CD4-positive, alpha-beta memory T cell (primary cell): ENCODE measurements at regions of chr19 and their contacts with region 1.

Region 1: GRCh38 chr19:1249298-1249989 is 1.1 kb downstream of the MIDN start:
- DNase-seq: peak; percentile 92 to 97 (median 95)
- H3K4me3 ChIP-seq: peak overlapping the region in 1 of 2 donors; percentile 77
- H3K4me3 Mint-ChIP-seq: peak overlapping the region; percentile 83 to 94 (median 90)
- H3K27ac ChIP-seq: peak overlapping the region; percentile 92
- H3K27ac Mint-ChIP-seq: peak overlapping the region; percentile 89 to 94 (median 91)
- H3K4me1 ChIP-seq: peaks cover 33% of the 10 kb centered on the region
- H3K4me1 Mint-ChIP-seq: peaks cover 2 to 26% (median 9%) of the 10 kb centered on the region in 4 donors
- H3K27me3 ChIP-seq: no peaks in the 10 kb centered on the region
- H3K27me3 Mint-ChIP-seq: no peaks in the 10 kb centered on the region

Region 2: DNA sequence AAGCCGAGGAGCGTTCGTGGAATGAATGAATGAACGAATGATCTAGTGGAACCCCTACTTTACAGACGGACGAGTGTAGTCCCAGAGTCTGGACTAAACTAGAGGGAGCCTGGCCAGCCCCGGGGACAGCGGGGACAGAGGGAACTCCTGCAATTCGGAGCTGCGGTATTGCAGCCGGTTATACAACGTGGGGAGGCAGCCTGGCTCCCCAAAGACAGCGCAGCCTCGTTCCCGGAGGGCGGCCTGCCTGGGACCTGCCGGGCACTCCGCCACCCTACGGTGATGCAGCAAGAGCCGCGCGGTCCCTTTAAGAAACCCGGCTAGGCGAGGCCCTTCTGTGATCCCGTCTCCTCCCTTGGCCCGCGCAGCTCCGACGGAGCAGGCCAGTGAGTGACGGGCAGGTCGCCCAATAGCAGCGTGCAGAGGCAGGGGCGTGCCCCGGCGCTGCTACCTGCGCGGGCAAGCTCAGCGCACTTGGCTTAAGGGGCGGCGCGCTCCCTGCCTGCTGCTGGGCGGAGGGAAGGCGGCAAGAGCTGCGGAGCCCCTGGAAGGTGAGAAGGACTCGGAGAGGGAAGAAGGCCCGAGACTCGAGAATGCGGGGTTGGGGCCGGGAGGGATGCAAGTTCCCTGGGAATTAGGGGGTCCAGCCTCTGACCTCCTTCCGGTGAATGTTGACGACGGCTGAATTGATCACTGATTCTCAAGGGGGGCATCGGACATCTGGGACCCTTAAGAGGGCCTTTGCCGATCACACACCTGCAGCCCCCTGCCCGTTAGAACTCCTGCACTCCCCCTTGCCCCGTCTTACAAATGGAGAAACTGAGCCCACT is 209.6 kb before region 1 on chr19 and contains the start of gene ABCA7:
- CTCF ChIA-PET with region 1: no interaction called
- POLR2A ChIA-PET with region 1: no interaction called
- intact Hi-C with region 1: no loop called
- DNase-seq: peak; percentile 98 to 99 (median 98)
- H3K4me3 ChIP-seq: peak within 1 kb of the TSS; percentile 56 to 100
- H3K4me3 Mint-ChIP-seq: peak within 1 kb of the TSS; percentile 95 to 100 (median 97)
- H3K27ac ChIP-seq: peak within 1 kb of the TSS; percentile 75
- H3K27ac Mint-ChIP-seq: peak within 1 kb of the TSS; percentile 91 to 97 (median 95)
- H3K4me1 ChIP-seq: peaks cover 54% of the 10 kb centered on the region
- H3K4me1 Mint-ChIP-seq: peaks cover 27 to 69% (median 48%) of the 10 kb centered on the region in 4 donors
- H3K27me3 ChIP-seq: no peaks in the 10 kb centered on the region
- H3K27me3 Mint-ChIP-seq: no peaks in the 10 kb centered on the region
- total RNA-seq, gene ABCA7: 313 to 319 TPM

Region 3: GRCh38 chr19:1151917-1152617 is 97.4 kb before region 1 on chr19:
- CTCF ChIA-PET with region 1: no interaction called
- POLR2A ChIA-PET with region 1: no interaction called
- intact Hi-C with region 1: no loop called
- DNase-seq: no peak
- H3K4me3 ChIP-seq: no peak overlapping the region
- H3K4me3 Mint-ChIP-seq: no peak overlapping the region
- H3K27ac ChIP-seq: no peak overlapping the region
- H3K27ac Mint-ChIP-seq: no peak overlapping the region
- H3K4me1 ChIP-seq: no peaks in the 10 kb centered on the region
- H3K4me1 Mint-ChIP-seq: peaks cover 0 to 3% (median under 1%) of the 10 kb centered on the region in 4 donors
- H3K27me3 ChIP-seq: no peaks in the 10 kb centered on the region
- H3K27me3 Mint-ChIP-seq: no peaks in the 10 kb centered on the region

Region 4: GRCh38 chr19:1232652-1233072 is 16.8 kb before region 1 on chr19:
- CTCF ChIA-PET with region 1: no interaction called
- POLR2A ChIA-PET with region 1: no interaction called
- intact Hi-C with region 1: no loop called
- DNase-seq: no peak
- H3K4me3 ChIP-seq: no peak overlapping the region
- H3K4me3 Mint-ChIP-seq: no peak overlapping the region
- H3K27ac ChIP-seq: no peak overlapping the region
- H3K27ac Mint-ChIP-seq: peak overlapping the region in 3 of 7 donors; percentile 13 to 44 (median 23)
- H3K4me1 ChIP-seq: no peaks in the 10 kb centered on the region
- H3K4me1 Mint-ChIP-seq: peaks cover 0 to 4% (median 0%) of the 10 kb centered on the region in 4 donors
- H3K27me3 ChIP-seq: no peaks in the 10 kb centered on the region
- H3K27me3 Mint-ChIP-seq: no peaks in the 10 kb centered on the region

Region 5: GRCh38 chr19:1260636-1261537 is 11.4 kb after region 1 on chr19:
- CTCF ChIA-PET with region 1: interaction called, 364 read pairs
- POLR2A ChIA-PET with region 1: interaction called, 650 read pairs
- intact Hi-C with region 1: loop called (anchors 1 kb)
- DNase-seq: peak; percentile 96 to 97 (median 97)
- H3K4me3 ChIP-seq: peak overlapping the region; percentile 78
- H3K4me3 Mint-ChIP-seq: peak overlapping the region; percentile 85 to 93 (median 91)
- H3K27ac ChIP-seq: peak overlapping the region; percentile 87
- H3K27ac Mint-ChIP-seq: peak overlapping the region; percentile 95 to 99 (median 99)
- H3K4me1 ChIP-seq: peaks cover 70% of the 10 kb centered on the region
- H3K4me1 Mint-ChIP-seq: peaks cover 29 to 64% (median 44%) of the 10 kb centered on the region in 4 donors
- H3K27me3 ChIP-seq: no peaks in the 10 kb centered on the region
- H3K27me3 Mint-ChIP-seq: peaks cover 0 to 3% of the 10 kb centered on the region in 2 donors